ENCODE measurements at regions of chr6 and their contacts with region 1.

Region 1: GRCh38 chr6:105424175-105424783 is 21.4 kb upstream of the PREP start:
- DNase-seq: peak; percentile 20 to 69 (median 40)
- H3K4me3 ChIP-seq: no peak overlapping the region
- H3K27ac ChIP-seq: no peak overlapping the region
- H3K4me1 ChIP-seq: no peaks in the 10 kb centered on the region
- H3K27me3 ChIP-seq: no peaks in the 10 kb centered on the region
- CTCF ChIP-seq: peak; percentile 57 to 70 (median 60)
- POLR2A ChIP-seq: no peak

Region 2: GRCh38 chr6:105087571-105088211 is 336.6 kb before region 1 on chr6:
- intact Hi-C with region 1: loop called (anchors 5 kb)
- DNase-seq: peak in 6 of 7 donors; percentile 23 to 62 (median 36)
- H3K4me3 ChIP-seq: no peak overlapping the region
- H3K27ac ChIP-seq: no peak overlapping the region
- H3K4me1 ChIP-seq: no peaks in the 10 kb centered on the region
- H3K27me3 ChIP-seq: no peaks in the 10 kb centered on the region
- CTCF ChIP-seq: peak; percentile 55 to 93 (median 84)
- POLR2A ChIP-seq: no peak

Region 3: GRCh38 chr6:105094133-105094640 is 330.1 kb before region 1 on chr6:
- intact Hi-C with region 1: loop called (anchors 5 kb)
- DNase-seq: no peak
- H3K4me3 ChIP-seq: no peak overlapping the region
- H3K27ac ChIP-seq: no peak overlapping the region
- H3K4me1 ChIP-seq: no peaks in the 10 kb centered on the region
- H3K27me3 ChIP-seq: no peaks in the 10 kb centered on the region
- CTCF ChIP-seq: no peak
- POLR2A ChIP-seq: no peak

Measured in adrenal gland (tissue), 19 donors.